Stomach (tissue), 19 donors: ENCODE measurements at regions of chr12 and their contacts with region 1.

Region 1: DNA sequence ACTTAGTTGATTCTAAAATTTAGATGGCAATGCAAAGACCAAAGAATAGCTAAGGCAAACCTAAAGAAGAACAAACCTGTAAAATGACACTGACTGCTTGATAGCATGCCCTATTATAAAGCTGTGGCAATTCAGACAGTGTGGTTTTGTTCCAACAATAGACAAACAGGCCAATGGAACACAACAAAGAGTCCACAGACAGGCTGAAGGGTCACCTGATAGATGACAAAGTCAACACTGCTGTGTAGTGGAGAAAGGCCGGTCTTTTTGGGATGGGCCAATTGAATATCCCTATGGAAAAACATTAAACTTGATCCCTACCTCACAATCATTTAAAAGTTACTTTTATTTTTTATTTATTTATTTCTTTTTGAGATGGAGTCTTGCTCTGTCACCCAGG is 33.8 kb upstream of the SLC25A3 start:
- DNase-seq: no peak
- H3K4me3 ChIP-seq: no peak overlapping the region
- H3K27ac ChIP-seq: no peak overlapping the region
- H3K4me1 ChIP-seq: peaks cover 0 to 8% (median 0%) of the 10 kb centered on the region in 4 donors
- H3K27me3 ChIP-seq: no peaks in the 10 kb centered on the region
- CTCF ChIP-seq: no peak
- EP300 ChIP-seq: no peak
- POLR2A ChIP-seq: no peak

Region 2: DNA sequence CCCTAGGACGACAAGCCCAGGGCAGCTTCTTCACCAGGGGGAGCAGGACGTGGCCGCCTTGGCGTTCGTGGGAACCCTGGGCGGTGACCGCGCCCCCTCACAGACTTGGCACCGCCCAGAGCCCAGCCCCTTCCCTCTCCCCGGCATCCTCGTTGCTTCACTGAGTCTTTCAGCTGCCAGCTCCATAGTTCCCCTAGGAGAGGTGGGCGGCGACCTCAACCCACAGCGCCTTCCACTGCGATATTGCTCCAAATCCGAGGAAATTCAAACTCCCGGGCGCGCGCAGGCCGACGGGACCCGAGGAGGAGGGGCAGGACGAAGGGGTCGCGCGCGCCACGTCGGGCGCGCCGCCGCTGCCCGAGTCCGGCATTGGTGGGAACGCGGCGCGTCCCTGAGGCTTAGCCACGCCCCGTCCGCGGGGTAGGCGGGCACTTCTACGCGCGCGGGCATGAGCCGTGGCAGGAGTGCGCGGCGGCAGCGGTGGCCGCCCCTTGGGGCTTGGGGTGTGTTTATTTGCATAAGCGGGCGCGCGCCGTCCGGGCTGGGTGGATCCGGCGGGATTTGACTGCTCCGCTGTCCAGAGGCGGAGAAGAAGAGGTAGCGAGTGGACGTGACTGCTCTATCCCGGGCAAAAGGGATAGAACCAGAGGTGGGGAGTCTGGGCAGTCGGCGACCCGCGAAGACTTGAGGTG is 85.2 kb after region 1 on chr12 and contains the starts of genes APAF1 and IKBIP:
- intact Hi-C with region 1: loop called (anchors 10 kb)
- DNase-seq: peak; percentile 99
- H3K4me3 ChIP-seq: peak within 1 kb of the TSS; percentile 77 to 99 (median 96)
- H3K27ac ChIP-seq: peak within 1 kb of the TSS; percentile 76 to 90 (median 89)
- H3K4me1 ChIP-seq: peaks cover 0 to 38% (median 23%) of the 10 kb centered on the region in 4 donors
- H3K27me3 ChIP-seq: no peaks in the 10 kb centered on the region
- CTCF ChIP-seq: no peak
- EP300 ChIP-seq: no peak
- POLR2A ChIP-seq: no peak
- total RNA-seq, gene APAF1: 9.9 to 93.9 (median 37.5) TPM
- total RNA-seq, gene IKBIP: under 0.01 to 14.5 (median 3.0) TPM